ENCODE measurements at regions of chr7 and their contacts with region 1.

Region 1: GRCh38 chr7:49483142-49483541 is 290.3 kb upstream of the VWC2 start:
- DNase-seq: peak; percentile 26
- ATAC-seq: peak; percentile 55 to 76

Region 2: DNA sequence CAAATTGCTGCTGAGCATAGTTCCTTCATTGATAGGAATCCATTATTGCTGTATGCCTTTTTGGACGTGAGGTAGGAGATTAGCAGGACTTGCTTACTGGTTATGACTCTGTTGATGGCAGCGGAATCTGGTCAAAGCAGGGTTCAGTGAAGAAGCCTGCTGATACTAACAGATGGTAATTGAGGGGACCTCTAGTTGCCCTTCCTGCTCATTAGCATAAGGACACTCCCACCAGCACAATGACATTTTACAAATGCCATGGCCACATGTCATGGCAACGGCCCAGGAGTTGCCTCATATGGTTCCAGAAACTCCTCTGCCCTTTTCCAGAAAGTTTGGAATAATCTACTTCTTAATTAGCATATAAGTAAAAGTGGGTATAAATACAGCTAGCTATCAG is 141.3 kb before region 1 on chr7:
- intact Hi-C with region 1: no loop called
- DNase-seq: no peak
- ATAC-seq: no peak

Region 3: DNA sequence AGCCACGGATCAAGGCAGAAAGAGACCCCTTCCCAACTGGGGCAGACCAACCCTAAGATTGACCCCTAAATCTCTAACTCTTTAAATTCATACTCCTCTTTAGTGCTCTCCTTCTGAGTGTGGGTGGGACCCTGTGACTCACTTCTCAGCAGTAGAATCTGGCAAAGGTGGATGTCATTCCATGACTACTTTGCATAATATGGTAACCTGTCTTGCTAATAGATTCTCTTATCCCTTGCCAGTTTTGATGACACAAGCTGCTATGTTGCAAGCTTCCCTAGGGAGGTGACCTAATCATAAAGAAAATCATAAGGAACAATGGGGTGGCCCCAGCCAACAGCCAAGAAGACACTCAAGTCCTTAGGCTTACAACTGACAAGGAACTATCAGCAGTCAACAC is 134.9 kb after region 1 on chr7:
- intact Hi-C with region 1: no loop called
- DNase-seq: no peak
- ATAC-seq: no peak

Region 4: DNA sequence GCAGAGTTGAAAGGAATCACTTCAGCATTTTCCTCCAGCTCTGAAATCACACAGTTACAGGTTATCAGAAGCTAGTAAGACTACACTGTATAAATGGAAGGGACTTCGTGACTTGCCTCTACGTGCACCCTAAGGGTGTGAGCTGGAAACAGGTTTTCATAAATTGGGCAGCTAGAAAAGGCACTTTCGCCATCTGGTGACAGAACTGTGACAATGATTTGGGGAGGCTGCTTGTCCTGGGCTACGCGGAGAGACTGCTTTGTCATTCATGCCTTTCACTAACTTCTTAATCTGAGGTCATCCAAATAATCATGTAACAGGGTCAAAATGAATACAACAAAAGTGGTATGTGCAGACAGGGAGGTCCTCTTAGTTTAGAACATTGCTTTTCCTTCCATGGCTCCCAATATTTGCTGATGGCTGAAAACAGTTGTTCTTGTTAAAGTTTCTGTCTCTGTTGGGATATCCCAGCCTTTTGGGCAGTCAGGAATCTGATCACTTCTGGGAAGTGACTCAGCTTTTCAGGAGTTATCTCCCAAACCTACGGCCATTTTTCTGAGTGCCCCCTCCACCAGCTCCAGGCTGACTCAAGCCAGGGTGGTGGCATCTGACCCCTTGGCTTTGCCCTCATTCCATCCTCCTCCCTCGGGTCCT is 308.1 kb after region 1 on chr7:
- intact Hi-C with region 1: loop called (anchors 5 to 10 kb)
- DNase-seq: no peak
- ATAC-seq: peak; percentile 65 to 77

Measured in left cardiac atrium (tissue), 4 donors.